ENCODE measurements at regions of chr17 and their contacts with region 1.

Region 1: DNA sequence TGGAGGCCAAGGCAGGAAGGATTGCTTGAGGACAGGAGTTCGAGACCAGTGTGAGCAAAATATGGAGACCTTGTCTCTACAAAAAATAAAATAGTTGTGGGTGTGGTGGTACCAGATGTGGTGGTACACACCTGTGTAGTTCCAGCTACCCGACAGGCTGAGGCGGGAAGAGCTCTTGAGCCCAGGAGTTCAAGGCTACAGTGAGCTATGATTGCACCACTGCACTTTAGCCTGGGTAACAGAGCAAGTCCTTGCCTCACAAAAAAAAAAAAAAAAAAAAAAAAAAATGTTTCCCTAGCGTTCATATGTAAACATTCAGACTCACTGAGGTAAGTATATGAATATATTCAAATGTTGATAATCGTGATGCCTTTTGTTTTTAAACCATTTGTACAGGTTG is 39.5 kb downstream of the CLUH start:
- DNase-seq: no peak
- H3K4me3 ChIP-seq: no peak overlapping the region
- H3K27ac ChIP-seq: no peak overlapping the region
- H3K4me1 ChIP-seq: no peaks in the 10 kb centered on the region
- CTCF ChIP-seq: no peak

Region 2: DNA sequence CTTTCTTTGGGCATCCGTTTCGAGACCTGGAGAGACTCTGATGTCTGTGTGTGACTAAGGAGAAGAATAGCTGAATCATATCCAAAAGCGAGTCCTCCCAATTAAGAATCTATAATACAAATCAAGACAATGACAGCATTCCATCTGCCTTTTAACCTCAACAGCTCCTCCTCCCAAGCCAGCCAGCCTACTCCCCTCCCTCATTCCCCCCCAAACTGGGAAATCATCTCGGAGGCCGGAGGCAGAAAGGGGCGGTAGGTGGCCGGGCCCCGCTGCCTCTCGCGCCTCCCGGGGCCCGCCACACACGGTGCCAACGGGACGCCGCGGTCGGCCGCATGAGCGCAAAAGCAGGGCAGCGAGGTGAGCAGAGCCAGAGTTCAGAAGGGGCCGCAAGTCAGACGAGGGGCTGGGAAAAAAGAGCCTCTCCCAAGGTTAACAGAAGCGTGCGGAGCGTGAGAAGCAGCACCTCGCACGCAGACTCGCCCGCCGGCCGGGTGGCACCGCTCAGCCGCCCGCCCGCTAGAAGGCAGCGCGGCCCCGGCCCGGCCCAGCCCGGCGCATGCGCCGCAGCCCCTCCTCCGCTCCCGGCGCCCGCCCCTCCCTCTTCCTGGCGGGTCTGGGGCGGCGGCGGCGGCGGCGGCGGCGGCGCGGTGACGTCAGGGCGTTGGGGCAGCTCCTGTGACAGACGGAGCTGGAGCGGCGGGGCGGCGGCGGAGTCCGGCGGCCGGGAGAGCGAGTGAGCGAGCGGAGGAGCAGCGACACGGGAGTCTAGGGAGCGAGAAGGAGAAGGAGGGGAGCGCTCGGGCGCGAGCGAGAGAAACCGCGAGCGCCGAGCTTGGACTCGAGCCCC is 78.8 kb before region 1 on chr17 and contains the start of gene PAFAH1B1:
- CTCF ChIA-PET with region 1: no interaction called
- POLR2A ChIA-PET with region 1: no interaction called
- intact Hi-C with region 1: loop called (anchors 2 kb)
- DNase-seq: peak; percentile 91
- H3K4me3 ChIP-seq: peak within 1 kb of the TSS; percentile 91
- H3K27ac ChIP-seq: peak within 1 kb of the TSS; percentile 80
- H3K4me1 ChIP-seq: peaks cover 26% of the 10 kb centered on the region
- CTCF ChIP-seq: peak; percentile 39; the same call in 1 of the 2 replicates
- total RNA-seq, gene PAFAH1B1: 51.1 and 61.3 TPM in 2 replicates

Measured in OCI-LY7 (cell line).